ENCODE measurements at regions of chr2 and their contacts with region 1.

Region 1: DNA sequence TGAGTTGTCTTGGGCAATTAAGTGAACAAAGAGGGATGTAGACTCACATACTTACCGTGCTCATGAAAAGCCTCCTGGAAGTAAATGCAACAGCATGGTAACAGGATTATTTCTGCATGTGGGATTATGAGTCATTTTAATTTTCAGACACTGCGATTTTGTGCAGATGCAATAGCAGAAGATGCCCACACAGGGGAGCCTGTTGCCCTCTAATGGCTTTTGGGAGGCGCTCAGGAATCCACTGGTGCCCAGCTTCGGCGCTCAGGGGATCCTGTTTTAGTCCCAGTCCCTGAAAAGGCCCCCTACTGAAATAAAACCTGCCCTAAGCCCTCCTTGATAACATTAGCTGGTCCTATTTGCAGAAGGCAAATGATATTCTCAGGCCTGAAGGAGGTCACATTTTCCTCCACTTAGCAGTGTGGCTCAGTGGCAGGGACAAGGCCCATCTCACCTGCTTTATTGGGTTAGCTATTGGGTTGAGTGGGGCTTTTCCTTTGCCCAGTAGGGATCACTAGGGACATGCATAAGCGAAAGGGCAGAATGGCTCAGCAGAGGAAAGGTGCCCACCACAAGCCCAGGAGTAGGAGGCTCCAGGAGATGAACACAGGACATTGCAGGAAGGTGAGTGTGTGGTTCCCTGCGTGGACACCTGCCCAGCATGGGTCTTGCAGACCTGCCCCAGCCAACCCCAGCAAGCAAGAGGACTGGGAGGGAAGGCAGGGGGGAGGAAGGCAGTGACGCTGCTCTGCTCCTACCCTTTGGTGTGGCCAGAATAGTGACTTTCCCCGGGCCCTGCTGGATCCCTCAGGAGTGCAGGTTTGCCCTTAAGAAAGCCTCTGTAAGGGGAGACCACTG is 26.5 kb upstream of the KCNS3 start:
- DNase-seq: peak; percentile 19 to 37
- ATAC-seq: peak; percentile 81 to 85
- H3K4me3 ChIP-seq: no peak overlapping the region
- H3K27ac ChIP-seq: no peak overlapping the region
- H3K4me1 ChIP-seq: no peaks in the 10 kb centered on the region
- H3K27me3 ChIP-seq: no peaks in the 10 kb centered on the region
- CTCF ChIP-seq: peak; percentile 82 to 91 (median 86)
- POLR2A ChIP-seq: no peak

Region 2: DNA sequence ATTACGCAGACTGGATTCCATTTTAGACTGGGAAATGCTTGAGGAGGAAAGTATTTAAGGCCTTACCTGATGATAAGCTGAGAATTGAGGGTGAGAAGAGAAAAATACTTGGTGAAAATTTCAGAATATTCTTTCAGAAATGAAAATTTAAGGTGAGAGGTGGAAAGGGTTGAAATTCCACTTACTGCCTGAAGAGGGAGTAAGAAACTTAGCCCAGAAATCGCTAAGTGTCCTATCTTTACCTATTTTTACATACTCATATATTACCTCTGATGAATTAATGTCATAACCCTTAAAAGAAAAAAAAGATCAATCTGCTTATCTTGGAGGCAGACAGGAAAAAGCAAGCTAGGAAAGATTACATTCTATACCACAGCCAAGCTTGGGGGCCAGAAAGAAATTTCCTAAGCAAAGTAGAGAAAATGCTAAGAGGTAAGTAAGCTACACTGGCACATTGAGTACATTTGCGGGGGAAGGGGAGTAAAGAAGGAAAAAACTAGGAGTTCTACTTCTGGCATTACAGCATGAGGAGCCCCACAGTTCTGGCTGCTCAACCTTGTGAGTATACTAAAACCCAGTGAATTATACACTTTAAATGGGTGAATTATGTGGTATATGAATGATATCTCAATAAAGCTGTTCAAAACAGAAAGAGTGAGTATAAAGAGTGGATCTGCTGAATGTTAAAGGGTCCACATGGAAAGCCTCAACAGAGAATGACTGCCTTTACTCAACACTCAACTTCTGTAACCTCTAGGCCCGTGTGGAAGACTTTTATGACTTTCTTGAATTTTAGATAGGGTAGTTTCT is 132.2 kb before region 1 on chr2:
- in situ Hi-C with region 1: no loop called
- intact Hi-C with region 1: no loop called
- DNase-seq: no peak
- ATAC-seq: no peak
- H3K4me3 ChIP-seq: no peak overlapping the region
- H3K27ac ChIP-seq: no peak overlapping the region
- H3K4me1 ChIP-seq: no peaks in the 10 kb centered on the region
- H3K27me3 ChIP-seq: no peaks in the 10 kb centered on the region
- CTCF ChIP-seq: peak; percentile 56 to 80 (median 67)
- POLR2A ChIP-seq: no peak

Region 3: GRCh38 chr2:17879101-17879912 is 27.3 kb after region 1 on chr2:
- in situ Hi-C with region 1: no loop called
- intact Hi-C with region 1: loop called (anchors 2 kb)
- DNase-seq: peak; percentile 73 to 79
- ATAC-seq: peak; percentile 82 to 83
- H3K4me3 ChIP-seq: peak overlapping the region; percentile 82 to 98 (median 94)
- H3K27ac ChIP-seq: peak overlapping the region; percentile 83 to 98 (median 92)
- H3K4me1 ChIP-seq: peaks cover 20 to 30% of the 10 kb centered on the region in 2 donors
- H3K27me3 ChIP-seq: no peaks in the 10 kb centered on the region
- CTCF ChIP-seq: peak; percentile 7 to 58 (median 36)
- POLR2A ChIP-seq: no peak

Region 4: DNA sequence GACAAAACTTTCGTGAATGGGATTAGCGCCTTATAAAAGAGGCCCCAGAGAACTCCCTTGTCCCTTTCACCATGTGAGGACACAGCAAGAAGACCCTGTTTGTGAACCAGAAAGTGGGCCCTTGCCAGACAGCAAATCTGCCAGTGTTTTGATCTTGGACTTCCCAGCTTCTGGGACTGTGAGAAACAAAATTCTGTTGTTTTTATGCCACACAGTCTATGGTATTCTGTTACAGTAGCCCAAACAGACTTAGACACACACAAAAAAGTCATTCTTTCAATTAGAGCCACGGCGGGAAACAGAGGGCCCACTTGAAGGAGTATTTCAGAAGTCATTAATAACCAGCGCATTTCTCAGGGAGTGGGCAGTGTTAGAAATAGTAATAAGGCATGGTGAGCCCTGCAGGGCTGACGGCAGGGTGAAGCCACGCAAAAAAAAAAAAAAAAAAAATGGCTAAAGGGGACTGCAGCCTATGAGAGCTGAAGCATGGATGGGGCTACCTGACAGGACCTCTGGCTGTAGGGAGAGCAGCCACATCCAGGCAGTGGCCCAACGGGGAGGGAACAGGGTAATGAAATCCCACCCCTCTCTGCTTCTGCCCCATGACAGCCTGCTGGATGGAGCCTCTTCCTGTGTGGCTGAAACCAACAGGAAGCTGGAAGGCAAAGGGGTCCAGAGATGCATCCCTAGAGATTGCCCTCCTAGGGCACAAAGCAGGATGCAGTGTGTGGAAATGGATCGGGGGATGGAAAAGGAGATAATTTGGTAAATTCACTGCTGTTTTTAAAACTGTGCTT is 215.8 kb after region 1 on chr2:
- in situ Hi-C with region 1: no loop called
- intact Hi-C with region 1: loop called (anchors 2 kb)
- DNase-seq: no peak
- ATAC-seq: no peak
- H3K4me3 ChIP-seq: no peak overlapping the region
- H3K27ac ChIP-seq: no peak overlapping the region
- H3K4me1 ChIP-seq: peaks cover 29 to 32% of the 10 kb centered on the region in 2 donors
- H3K27me3 ChIP-seq: no peaks in the 10 kb centered on the region
- CTCF ChIP-seq: no peak
- POLR2A ChIP-seq: no peak

Region 5: DNA sequence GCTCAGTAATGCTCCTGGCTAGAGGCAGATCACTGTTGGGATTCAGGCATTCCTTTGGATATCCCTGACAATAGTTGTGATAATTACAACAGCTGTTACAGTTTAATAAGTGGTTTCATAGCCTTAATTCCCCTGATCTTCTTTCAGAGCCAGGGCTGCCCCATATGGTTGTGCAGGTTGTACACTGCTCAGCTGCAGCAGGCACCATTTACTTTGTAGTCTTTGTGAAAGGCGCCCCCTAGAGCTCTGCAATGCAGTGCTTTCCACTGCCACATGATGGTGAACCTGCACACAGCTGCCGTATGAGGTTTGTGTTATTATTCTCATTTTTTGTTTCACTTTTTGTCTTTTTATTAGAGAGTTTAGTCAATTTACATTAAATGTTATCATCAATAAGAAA is 265.6 kb after region 1 on chr2:
- in situ Hi-C with region 1: no loop called
- intact Hi-C with region 1: loop called (anchors 1 kb)
- DNase-seq: peak; percentile 8 to 30
- ATAC-seq: peak; percentile 41 to 73
- H3K4me3 ChIP-seq: no peak overlapping the region
- H3K27ac ChIP-seq: no peak overlapping the region
- H3K4me1 ChIP-seq: peaks cover 11 to 15% of the 10 kb centered on the region in 2 donors
- H3K27me3 ChIP-seq: no peaks in the 10 kb centered on the region
- CTCF ChIP-seq: peak in 4 of 5 experiments; percentile 46 to 57 (median 52)
- POLR2A ChIP-seq: no peak

Region 6: DNA sequence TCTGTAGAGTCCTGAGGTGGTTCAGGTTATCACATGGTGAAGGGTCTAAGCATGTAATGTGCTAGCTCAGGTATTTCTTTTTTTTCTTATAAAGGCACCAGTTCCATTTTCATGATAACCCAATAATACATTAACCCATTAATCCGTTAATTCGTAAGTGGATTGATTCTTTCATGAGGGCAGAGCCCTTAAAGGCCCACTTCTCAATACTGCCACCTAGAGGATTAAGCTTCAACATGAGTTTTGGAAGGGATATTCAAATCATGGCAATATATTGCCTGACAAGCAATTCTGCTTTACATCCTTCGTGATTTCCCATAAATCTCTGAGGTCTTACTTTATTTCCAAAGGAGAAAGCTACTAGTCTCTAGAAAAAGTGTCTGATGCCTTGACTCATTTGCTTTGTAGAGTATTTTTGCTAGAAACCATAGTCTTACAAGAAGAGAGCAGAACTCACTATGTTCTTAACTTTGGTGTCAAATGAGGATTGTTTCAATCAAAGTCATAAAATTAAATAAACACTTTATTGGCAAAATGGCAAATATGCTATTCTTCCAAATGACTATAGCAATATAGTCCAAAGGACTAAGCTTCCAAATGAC is 297.8 kb after region 1 on chr2:
- in situ Hi-C with region 1: loop called in 2 of 4 experiments (anchors 10 kb)
- intact Hi-C with region 1: loop called (anchors 1 kb)
- DNase-seq: no peak
- ATAC-seq: peak; percentile 53 to 70
- H3K4me3 ChIP-seq: no peak overlapping the region
- H3K27ac ChIP-seq: no peak overlapping the region
- H3K4me1 ChIP-seq: peaks cover 5 to 15% of the 10 kb centered on the region in 2 donors
- H3K27me3 ChIP-seq: no peaks in the 10 kb centered on the region
- CTCF ChIP-seq: peak; percentile 44 to 80 (median 62)
- POLR2A ChIP-seq: no peak

Region 7: GRCh38 chr2:18178736-18179349 is 326.9 kb after region 1 on chr2:
- in situ Hi-C with region 1: loop called in 2 of 4 experiments (anchors 5 to 10 kb)
- intact Hi-C with region 1: loop called (anchors 2 kb)
- DNase-seq: no peak
- ATAC-seq: peak; percentile 70 to 83
- H3K4me3 ChIP-seq: no peak overlapping the region
- H3K27ac ChIP-seq: no peak overlapping the region
- H3K4me1 ChIP-seq: peaks cover 0 to 10% of the 10 kb centered on the region in 2 donors
- H3K27me3 ChIP-seq: no peaks in the 10 kb centered on the region
- CTCF ChIP-seq: peak; percentile 66 to 88 (median 71)
- POLR2A ChIP-seq: no peak

Region 8: DNA sequence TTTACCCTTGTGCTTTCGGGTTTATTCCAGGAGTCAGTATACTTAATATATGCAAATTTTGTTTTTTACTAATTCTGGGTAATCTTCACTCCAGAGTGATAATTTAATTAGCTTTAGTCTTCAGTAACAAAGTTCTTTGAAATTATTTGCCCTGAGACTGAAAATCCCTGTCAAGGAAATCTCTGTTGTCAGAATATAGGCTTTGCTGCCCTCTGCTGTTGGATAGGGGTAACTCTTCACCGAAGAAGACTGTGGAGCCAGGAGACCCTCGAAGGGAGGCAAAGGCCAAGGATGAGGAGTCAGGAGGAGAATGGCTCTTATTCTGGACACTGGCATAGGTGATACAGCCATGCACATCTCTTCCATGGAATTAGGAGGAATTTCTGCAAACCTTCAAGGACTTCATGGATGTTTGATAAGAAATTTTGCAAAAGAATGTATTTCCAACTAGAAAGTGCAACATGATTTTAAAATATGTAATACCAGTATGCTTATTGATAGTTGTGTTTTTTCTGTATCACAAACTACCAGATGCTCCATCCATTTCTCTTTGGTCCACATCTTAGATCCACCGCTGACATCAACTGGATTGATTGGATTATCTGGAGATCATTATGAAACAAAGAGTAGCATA is 526.2 kb after region 1 on chr2:
- in situ Hi-C with region 1: loop called in 1 of 4 experiments (anchors 25 kb)
- intact Hi-C with region 1: loop called (anchors 2 kb)
- DNase-seq: no peak
- ATAC-seq: no peak
- H3K4me3 ChIP-seq: no peak overlapping the region
- H3K27ac ChIP-seq: no peak overlapping the region
- H3K4me1 ChIP-seq: no peaks in the 10 kb centered on the region
- H3K27me3 ChIP-seq: no peaks in the 10 kb centered on the region
- CTCF ChIP-seq: peak in 4 of 5 experiments; percentile 44 to 73 (median 59)
- POLR2A ChIP-seq: no peak

Measured in gastrocnemius medialis (tissue), 4 donors.